Activated naive CD4-positive, alpha-beta T cell treated with anti-CD3 and anti-CD28 coated beads for 36 hours (primary cell): ENCODE measurements at regions of chr13 and their contacts with region 1.

Region 1: DNA sequence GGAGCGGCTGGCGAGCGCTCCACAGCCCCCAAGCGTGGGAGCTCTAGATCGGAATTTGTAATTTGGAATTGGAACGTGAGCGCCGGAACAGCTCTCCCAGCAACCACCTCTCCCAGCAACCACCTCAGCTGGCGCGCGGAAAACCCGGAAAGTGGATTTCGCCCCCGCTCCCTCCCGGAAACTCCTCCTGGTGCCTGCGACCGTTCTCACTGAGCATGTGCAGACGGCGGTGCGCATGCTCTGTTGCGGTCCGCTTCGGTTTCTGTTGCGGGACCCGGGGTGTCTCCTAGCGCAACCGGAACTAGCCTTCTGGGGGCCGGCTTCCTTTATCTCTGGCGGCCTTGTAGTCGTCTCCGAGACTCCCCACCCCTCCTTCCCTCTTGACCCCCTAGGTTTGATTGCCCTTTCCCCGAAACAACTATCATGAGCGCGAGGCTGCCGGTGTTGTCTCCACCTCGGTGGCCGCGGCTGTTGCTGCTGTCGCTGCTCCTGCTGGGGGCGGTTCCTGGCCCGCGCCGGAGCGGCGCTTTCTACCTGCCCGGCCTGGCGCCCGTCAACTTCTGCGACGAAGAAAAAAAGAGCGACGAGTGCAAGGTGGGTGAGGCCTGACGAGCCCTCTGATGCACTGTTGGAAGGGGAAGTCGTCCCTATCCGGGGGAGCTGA is at the start of gene TM9SF2:
- DNase-seq: peak; percentile 98
- H3K4me3 Mint-ChIP-seq: peak within 1 kb of the TSS; percentile 92
- H3K27ac Mint-ChIP-seq: peak within 1 kb of the TSS; percentile 92
- H3K4me1 Mint-ChIP-seq: peaks cover 70% of the 10 kb centered on the region
- H3K27me3 Mint-ChIP-seq: no peaks in the 10 kb centered on the region
- total RNA-seq, gene TM9SF2: 35.2 to 36.4 TPM

Region 2: GRCh38 chr13:98565726-98566565 is 935.4 kb before region 1 on chr13:
- CTCF ChIA-PET with region 1: no interaction called
- intact Hi-C with region 1: loop called (anchors 5 kb)
- DNase-seq: peak; percentile 38
- H3K4me3 Mint-ChIP-seq: peak overlapping the region; percentile 53
- H3K27ac Mint-ChIP-seq: peak overlapping the region; percentile 88
- H3K4me1 Mint-ChIP-seq: peaks cover 92% of the 10 kb centered on the region
- H3K27me3 Mint-ChIP-seq: no peaks in the 10 kb centered on the region

Region 3: GRCh38 chr13:99214232-99214631 is 287.1 kb before region 1 on chr13:
- CTCF ChIA-PET with region 1: no interaction called
- intact Hi-C with region 1: loop called (anchors 2 kb)
- DNase-seq: peak; percentile 83
- H3K4me3 Mint-ChIP-seq: peak overlapping the region; percentile 72
- H3K27ac Mint-ChIP-seq: peak overlapping the region; percentile 78
- H3K4me1 Mint-ChIP-seq: peaks cover 82% of the 10 kb centered on the region
- H3K27me3 Mint-ChIP-seq: no peaks in the 10 kb centered on the region

Region 4: GRCh38 chr13:99386911-99387788 is 114.2 kb before region 1 on chr13:
- CTCF ChIA-PET with region 1: no interaction called
- intact Hi-C with region 1: loop called (anchors 1 kb)
- DNase-seq: peak; percentile 96
- H3K4me3 Mint-ChIP-seq: no peak overlapping the region
- H3K27ac Mint-ChIP-seq: peak overlapping the region; percentile 85
- H3K4me1 Mint-ChIP-seq: peaks cover 72% of the 10 kb centered on the region
- H3K27me3 Mint-ChIP-seq: no peaks in the 10 kb centered on the region

Region 5: DNA sequence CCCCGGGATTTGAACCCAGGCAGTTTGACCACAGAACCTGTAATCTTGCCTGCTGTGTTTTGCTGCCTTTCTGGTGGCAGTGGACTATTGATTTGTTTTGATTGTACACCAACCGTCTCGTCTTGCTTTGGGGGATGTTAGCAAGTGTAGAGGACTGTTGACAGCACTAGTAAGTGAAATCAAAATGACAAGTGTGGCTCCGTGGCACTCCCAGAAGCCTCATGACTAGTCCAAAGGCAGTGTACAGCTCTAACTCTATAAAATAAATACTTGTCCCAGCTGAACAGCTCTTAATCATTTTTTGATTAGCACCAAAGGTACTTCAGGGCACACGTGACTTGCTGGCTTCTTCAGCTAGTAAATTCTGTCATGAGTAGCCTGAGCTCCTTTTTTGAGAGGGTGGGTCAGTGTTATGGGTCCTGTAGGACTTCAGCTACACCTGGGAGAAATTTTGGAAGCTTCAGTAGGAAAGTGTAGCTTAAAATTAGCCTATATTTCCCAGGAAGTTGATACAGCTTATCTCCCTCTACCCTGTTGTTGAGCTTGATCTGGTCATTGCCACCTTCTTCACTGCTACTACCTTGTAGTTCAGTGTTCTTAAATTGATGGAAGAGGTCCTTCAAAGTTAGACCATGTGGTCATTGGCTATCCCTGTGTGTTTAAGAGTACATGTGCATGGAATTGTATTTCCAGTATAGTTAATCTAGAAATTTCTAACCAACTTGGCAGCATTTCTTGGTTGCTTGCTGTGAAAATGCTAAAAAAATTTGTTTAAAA is 15.0 kb after region 1 on chr13:
- CTCF ChIA-PET with region 1: interaction called, 20 read pairs
- intact Hi-C with region 1: no loop called
- DNase-seq: no peak
- H3K4me3 Mint-ChIP-seq: no peak overlapping the region
- H3K27ac Mint-ChIP-seq: no peak overlapping the region
- H3K4me1 Mint-ChIP-seq: peaks cover 37% of the 10 kb centered on the region
- H3K27me3 Mint-ChIP-seq: no peaks in the 10 kb centered on the region

Region 6: GRCh38 chr13:100588331-100589177 is 1087.2 kb after region 1 on chr13 and contains the start of gene GGACT:
- CTCF ChIA-PET with region 1: interaction called, 3 read pairs
- intact Hi-C with region 1: loop called (anchors 5 kb)
- DNase-seq: peak; percentile 84
- H3K4me3 Mint-ChIP-seq: peak within 1 kb of the TSS; percentile 75
- H3K27ac Mint-ChIP-seq: peak within 1 kb of the TSS; percentile 87
- H3K4me1 Mint-ChIP-seq: peaks cover 39% of the 10 kb centered on the region
- H3K27me3 Mint-ChIP-seq: no peaks in the 10 kb centered on the region
- total RNA-seq, gene GGACT: 3.9 to 6.6 TPM